Heart left ventricle (tissue), 16 donors: ENCODE measurements at regions of chr3 and their contacts with region 1.

Region 1: DNA sequence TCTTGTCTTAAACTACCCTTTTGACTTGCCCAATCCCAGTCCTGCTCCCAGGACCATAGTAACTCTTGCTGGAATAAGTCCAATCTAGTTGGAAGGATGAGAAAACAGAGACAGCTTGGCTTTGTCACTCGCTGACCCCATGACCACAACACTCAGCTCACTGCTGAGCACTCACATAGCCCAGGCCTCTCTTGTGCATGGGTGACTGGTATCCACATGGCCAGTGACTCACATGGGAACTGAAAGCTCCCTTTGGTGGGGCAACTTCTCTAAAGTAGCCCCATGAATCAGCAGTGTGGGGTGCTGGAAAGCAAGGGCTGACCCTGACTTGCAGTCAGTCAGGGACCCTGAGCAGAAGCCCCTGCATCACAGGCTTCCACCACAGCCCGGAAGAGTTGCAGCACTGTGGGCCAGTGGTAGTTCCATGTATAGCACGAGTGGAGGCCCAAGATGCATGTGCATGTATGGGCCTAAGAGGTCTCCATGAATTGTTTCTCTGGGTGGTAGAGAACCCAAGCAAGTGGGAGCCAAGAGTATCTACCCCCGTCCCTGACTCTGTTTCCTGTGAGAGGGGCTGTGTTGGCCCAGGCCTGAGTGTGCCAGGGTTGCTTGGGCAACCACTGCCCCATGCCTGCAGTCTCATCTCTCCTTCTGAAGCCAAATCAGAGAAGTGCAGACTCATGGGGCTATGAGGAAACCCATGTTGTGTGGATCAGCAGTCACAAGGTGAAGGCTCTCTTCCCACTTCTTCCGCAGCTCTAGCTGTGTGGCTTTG is 62.1 kb upstream of the XCR1 start:
- DNase-seq: peak; percentile 55 to 74 (median 71)
- ATAC-seq: peak; percentile 81 to 92 (median 87)
- H3K4me3 ChIP-seq: no peak overlapping the region
- H3K27ac ChIP-seq: peak overlapping the region in 3 of 12 donors; percentile 43 to 90 (median 52)
- H3K4me1 ChIP-seq: peaks cover 0 to 62% (median 0%) of the 10 kb centered on the region in 12 donors
- H3K27me3 ChIP-seq: no peaks in the 10 kb centered on the region
- CTCF ChIP-seq: no peak
- POLR2A ChIP-seq: no peak

Region 2: DNA sequence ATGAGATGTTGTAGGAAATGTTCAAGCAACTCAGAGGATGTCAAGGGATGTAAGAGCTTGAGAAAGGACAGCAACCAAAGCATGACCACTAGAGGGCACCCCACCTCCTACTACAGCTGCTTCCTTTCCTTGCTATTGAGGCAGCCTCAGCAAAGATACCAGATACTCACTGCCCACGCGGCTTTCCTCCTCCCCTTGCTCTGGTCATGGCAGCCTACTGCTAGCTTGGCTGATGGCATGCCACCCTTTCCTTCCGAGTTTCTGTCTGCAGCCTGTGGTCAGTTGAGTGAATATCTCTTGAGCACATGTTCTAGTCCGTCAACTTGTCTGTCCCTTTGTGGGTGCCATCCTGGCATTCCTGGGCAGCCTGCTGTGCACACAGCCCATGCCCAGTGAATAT is 150.6 kb before region 1 on chr3:
- intact Hi-C with region 1: loop called in 1 of 10 experiments (anchors 2 kb)
- DNase-seq: peak; percentile 69 to 85 (median 78)
- ATAC-seq: peak; percentile 64 to 89 (median 88)
- H3K4me3 ChIP-seq: no peak overlapping the region
- H3K27ac ChIP-seq: peak overlapping the region in 1 of 12 donors; percentile 28
- H3K4me1 ChIP-seq: peaks cover 0 to 41% (median 16%) of the 10 kb centered on the region in 12 donors
- H3K27me3 ChIP-seq: no peaks in the 10 kb centered on the region
- CTCF ChIP-seq: peak; percentile 78 to 90 (median 86)
- POLR2A ChIP-seq: no peak

Region 3: GRCh38 chr3:46208167-46208704 is 118.8 kb after region 1 on chr3 and contains the start of gene CCR1:
- intact Hi-C with region 1: loop called in 1 of 10 experiments (anchors 5 kb)
- DNase-seq: peak in 3 of 5 donors; percentile 29 to 51 (median 48)
- ATAC-seq: peak in 3 of 4 donors; percentile 55 to 64 (median 61)
- H3K4me3 ChIP-seq: peak within 1 kb of the TSS in 9 of 12 donors; percentile 7 to 63 (median 27)
- H3K27ac ChIP-seq: peak within 1 kb of the TSS in 6 of 12 donors; percentile 10 to 90 (median 24)
- H3K4me1 ChIP-seq: peaks cover 0 to 65% (median 0%) of the 10 kb centered on the region in 12 donors
- H3K27me3 ChIP-seq: no peaks in the 10 kb centered on the region
- CTCF ChIP-seq: peak in 7 of 12 donors; percentile 10 to 42 (median 21)
- POLR2A ChIP-seq: no peak
- total RNA-seq, gene CCR1: 1.2 to 52.6 (median 2.4) TPM

Region 4: DNA sequence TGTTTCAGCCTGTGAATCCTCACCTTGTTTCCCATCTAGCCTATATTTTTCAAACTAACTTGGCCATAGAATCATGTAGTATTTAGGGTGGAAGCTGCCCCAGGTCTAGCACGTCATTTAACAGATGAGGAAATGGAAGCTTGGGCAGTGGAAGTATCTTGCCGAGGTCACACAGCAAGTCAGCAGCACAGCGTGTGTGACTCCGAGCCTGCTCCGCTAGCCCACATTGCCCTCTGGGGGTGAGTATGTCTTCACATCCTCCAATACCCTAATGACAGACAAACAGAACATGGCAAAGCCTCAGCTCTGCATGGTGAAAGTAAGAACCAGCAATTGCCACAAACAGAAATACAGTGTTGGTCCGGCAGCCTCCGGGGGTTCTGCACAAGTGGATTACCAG is 279.1 kb after region 1 on chr3:
- intact Hi-C with region 1: loop called in 9 of 10 experiments (anchors 5 to 10 kb)
- DNase-seq: peak; percentile 41 to 83 (median 55)
- ATAC-seq: peak; percentile 53 to 87 (median 72)
- H3K4me3 ChIP-seq: no peak overlapping the region
- H3K27ac ChIP-seq: peak overlapping the region in 1 of 12 donors; percentile 78
- H3K4me1 ChIP-seq: peaks cover 0 to 44% (median 0%) of the 10 kb centered on the region in 12 donors
- H3K27me3 ChIP-seq: peaks cover 0 to 41% (median 0%) of the 10 kb centered on the region in 9 donors
- CTCF ChIP-seq: peak in 6 of 12 donors; percentile 8 to 45 (median 24)
- POLR2A ChIP-seq: no peak

Region 5: DNA sequence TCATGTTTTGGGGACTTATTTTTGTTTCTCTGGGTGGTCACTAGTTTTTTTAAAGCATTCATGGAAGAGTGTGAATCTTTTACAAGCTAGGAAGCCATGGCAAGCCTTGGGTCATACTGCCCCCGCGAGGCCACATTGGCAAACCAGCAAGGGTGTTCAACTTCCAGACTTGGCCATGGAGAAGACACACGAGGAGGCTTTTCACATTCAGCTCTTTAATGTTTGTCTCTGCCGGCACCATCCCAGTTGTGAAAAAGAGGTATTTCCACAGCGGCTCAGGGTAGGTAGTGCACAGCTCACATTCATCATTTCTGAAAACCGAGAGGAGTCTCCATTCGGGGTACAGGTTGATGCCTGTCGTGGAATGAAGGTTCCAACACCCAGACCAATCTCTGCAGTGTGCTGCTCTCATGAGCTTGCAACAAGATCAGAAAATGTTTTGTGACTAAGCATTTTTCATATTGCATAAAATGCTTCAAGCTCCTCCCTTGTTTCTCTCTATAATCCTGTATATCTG is 289.1 kb after region 1 on chr3:
- intact Hi-C with region 1: loop called in 9 of 10 experiments (anchors 5 to 10 kb)
- DNase-seq: peak; percentile 42 to 79 (median 59)
- ATAC-seq: peak in 3 of 4 donors; percentile 50 to 78 (median 60)
- H3K4me3 ChIP-seq: no peak overlapping the region
- H3K27ac ChIP-seq: no peak overlapping the region
- H3K4me1 ChIP-seq: peaks cover 0 to 42% (median 3%) of the 10 kb centered on the region in 12 donors
- H3K27me3 ChIP-seq: peaks cover 0 to 9% (median 0%) of the 10 kb centered on the region in 9 donors
- CTCF ChIP-seq: peak; percentile 30 to 69 (median 54)
- POLR2A ChIP-seq: no peak

Region 6: DNA sequence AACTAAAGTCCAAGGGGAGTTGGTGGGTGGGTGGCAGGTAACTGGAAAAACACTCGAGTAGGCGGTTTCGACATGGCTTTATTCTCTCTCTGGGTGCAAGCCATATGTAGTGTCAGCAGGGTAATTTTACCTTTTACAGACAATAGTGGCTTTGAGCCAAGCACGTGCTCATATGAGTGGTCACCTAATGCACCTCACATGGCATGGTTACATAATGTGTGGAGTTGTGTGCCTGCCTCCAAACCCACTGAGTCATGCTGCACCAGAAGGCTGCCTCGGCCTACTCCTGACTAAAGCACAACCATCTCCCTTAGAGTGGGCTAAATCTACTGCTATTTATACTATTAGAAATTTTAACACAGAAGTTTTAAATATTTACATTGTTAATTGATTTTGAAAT is 334.2 kb after region 1 on chr3:
- intact Hi-C with region 1: loop called in 1 of 10 experiments (anchors 10 kb)
- DNase-seq: no peak
- ATAC-seq: no peak
- H3K4me3 ChIP-seq: no peak overlapping the region
- H3K27ac ChIP-seq: no peak overlapping the region
- H3K4me1 ChIP-seq: peaks cover 0 to 14% (median 0%) of the 10 kb centered on the region in 12 donors
- H3K27me3 ChIP-seq: no peaks in the 10 kb centered on the region
- CTCF ChIP-seq: no peak
- POLR2A ChIP-seq: no peak

Region 7: DNA sequence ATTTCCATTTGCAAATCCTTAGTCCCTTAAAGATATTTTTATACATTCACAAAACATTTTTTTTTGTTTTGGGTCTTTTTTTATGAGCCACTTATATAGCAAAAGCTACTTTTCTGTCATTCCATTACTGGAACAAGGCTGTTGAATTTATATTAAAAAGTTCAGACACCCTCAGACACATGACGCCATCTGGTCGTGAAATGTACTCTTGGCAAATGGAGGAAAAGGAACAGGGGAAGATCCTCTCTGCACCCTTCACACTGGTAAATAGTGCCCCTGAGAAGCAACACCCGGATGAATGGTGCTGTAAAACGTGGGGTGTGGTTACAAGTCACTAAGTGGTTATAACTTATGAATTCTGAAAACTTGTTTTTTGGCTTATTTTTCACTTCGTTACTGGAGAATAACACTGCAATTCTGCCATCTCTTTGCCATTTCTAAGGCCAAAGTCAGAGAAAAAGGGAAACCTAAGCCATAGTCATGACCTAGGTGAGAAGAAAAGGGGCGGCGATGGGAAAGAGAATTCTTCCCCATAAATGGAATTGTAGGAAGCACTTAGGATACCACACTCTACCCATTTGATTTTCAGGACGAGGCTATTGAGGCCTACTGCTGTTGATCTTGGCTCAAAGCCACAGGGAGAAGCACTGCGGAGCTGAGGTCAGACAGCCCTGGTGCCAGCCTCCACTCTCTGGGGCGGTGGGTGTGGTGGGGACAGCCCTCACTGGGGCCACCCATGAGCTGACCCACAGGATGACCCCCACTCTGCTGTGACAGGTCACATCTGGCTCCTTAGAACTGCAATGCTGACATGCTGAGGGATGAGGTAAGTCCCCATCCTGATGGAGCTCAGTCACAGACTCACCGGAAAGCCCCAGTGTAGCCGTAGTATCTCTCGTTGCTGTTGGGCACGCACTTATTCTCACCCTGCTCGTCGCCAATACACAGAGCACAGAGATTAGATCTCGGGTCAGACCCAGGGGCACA is 353.4 kb after region 1 on chr3:
- intact Hi-C with region 1: loop called in 1 of 10 experiments (anchors 10 kb)
- DNase-seq: no peak
- ATAC-seq: peak in 1 of 4 donors; percentile 16
- H3K4me3 ChIP-seq: no peak overlapping the region
- H3K27ac ChIP-seq: no peak overlapping the region
- H3K4me1 ChIP-seq: peaks cover 0 to 11% (median 0%) of the 10 kb centered on the region in 12 donors
- H3K27me3 ChIP-seq: no peaks in the 10 kb centered on the region
- CTCF ChIP-seq: peak in 5 of 12 donors; percentile 37 to 69 (median 51)
- POLR2A ChIP-seq: no peak